ENCODE measurements at regions of chr7 and their contacts with region 1.

Region 1: DNA sequence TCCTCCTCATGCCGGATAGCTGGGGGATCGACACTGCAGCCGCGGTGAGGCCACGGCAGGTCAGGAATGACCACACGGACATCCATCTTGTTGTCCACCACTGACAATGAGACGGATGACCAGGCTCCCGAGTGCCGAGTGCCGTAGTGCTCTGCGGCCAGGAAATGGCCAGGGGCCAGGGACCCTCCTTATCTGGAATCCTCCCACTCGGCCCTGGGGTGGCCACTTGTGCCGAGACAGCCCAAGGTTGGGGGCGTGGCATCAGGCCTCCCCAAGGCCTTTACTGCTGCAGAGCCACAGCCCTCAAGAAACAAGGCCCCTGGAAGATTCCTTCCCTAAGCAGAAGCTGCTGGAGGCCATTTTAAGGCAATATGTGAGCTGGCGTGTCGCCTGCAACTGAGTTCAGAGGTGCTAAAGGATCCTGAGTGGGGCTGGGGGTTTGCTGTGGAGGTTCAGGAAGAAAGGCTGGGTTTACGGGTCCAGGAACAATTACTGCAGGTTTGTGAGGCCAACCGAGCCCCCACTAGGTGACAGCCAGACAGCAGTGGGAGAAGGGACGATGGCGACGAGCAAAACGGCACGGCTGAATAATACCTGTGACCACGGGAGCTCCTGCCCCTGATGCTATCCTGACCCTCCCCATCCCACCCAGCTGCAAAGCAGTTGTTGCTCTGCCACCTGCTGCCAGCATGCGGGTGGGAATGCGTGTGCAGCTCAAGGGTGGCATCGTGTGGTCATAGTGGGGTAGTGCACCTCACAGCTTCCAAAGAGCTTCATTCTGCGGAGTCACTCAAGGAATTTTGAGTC is 31.6 kb upstream of the LEP start:
- DNase-seq: peak; percentile 34 to 93
- H3K4me3 ChIP-seq: no peak overlapping the region
- CTCF ChIP-seq: peak in 1 of 3 donors; percentile 82
- POLR2A ChIP-seq: no peak

Region 2: GRCh38 chr7:127667017-127667670 is 542.3 kb before region 1 on chr7:
- intact Hi-C with region 1: no loop called
- DNase-seq: no peak
- H3K4me3 ChIP-seq: no peak overlapping the region
- CTCF ChIP-seq: no peak
- POLR2A ChIP-seq: no peak

Region 3: GRCh38 chr7:127708788-127709187 is 500.6 kb before region 1 on chr7:
- intact Hi-C with region 1: loop called (anchors 5 kb)
- DNase-seq: peak in 1 of 2 donors; percentile 86
- H3K4me3 ChIP-seq: no peak overlapping the region
- CTCF ChIP-seq: peak in 1 of 3 donors; percentile 71
- POLR2A ChIP-seq: no peak

Region 4: GRCh38 chr7:128135515-128136214 is 73.8 kb before region 1 on chr7:
- intact Hi-C with region 1: loop called (anchors 5 kb)
- DNase-seq: no peak
- H3K4me3 ChIP-seq: peak overlapping the region; percentile 31
- CTCF ChIP-seq: no peak
- POLR2A ChIP-seq: no peak

Measured in lower leg skin (tissue), 4 donors.